ENCODE measurements at regions of chr5 and their contacts with region 1.

Region 1: GRCh38 chr5:1503241-1504068 is 20.3 kb downstream of the LPCAT1 start:
- DNase-seq: no peak
- ATAC-seq: no peak
- H3K4me3 ChIP-seq: no peak overlapping the region
- H3K27ac ChIP-seq: no peak overlapping the region
- H3K4me1 ChIP-seq: no peaks in the 10 kb centered on the region
- H3K27me3 ChIP-seq: no peaks in the 10 kb centered on the region
- CTCF ChIP-seq: no peak

Region 2: DNA sequence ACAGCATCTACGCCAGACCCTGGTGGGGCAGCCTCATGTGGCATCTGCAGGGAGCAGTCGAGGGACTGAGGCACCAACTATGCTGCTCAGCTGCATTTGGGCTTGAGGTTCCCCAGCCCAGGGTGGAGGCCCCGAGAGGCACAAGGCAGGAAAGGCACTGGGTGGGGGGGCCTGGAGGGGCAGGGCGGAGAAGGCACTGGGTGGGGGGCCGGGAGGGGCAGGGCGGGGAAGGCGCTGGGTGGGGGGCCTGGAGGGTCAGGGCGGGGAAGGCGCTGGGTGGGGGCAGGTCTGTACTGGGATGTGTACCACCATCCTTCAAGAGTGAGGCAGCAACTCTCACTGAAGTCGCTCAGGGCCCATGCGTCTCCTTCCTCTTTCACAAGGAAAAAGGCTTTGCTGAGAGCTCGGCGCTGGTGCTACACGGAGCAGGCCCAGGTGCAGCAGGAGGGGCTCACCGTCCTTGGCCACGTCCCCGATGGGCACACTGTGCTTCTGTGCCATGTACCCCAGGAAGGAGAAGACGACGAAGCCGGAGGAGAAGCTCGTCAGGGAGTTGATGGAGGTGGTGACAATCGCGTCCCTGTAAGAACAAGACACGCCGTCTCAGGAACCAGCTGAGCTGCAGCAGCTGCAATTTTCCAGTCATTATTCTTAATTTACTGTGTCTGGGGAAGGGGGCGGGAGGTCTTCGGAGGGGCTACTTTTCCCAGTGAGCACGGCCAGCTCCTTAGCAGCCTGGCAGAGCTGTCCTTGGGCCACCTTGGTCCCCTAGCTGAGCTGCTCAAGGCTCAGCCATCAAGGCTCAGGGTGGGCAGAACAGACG is 89.0 kb before region 1 on chr5:
- CTCF ChIA-PET with region 1: no interaction called
- POLR2A ChIA-PET with region 1: no interaction called
- in situ Hi-C with region 1: no loop called
- intact Hi-C with region 1: no loop called
- DNase-seq: no peak
- ATAC-seq: peak; percentile 76
- H3K4me3 ChIP-seq: no peak overlapping the region
- H3K27ac ChIP-seq: no peak overlapping the region
- H3K4me1 ChIP-seq: no peaks in the 10 kb centered on the region
- H3K27me3 ChIP-seq: no peaks in the 10 kb centered on the region
- CTCF ChIP-seq: no peak

Region 3: GRCh38 chr5:1668141-1668721 is 164.8 kb after region 1 on chr5:
- CTCF ChIA-PET with region 1: interaction called, 10 read pairs
- POLR2A ChIA-PET with region 1: no interaction called
- in situ Hi-C with region 1: no loop called
- intact Hi-C with region 1: no loop called
- DNase-seq: no peak
- ATAC-seq: peak; percentile 56
- H3K4me3 ChIP-seq: no peak overlapping the region
- H3K27ac ChIP-seq: no peak overlapping the region
- H3K4me1 ChIP-seq: peaks cover 4% of the 10 kb centered on the region
- H3K27me3 ChIP-seq: peaks cover 9% of the 10 kb centered on the region; the same call in 1 of the 2 replicates
- CTCF ChIP-seq: no peak

Region 4: GRCh38 chr5:2303431-2304100 is 800.1 kb after region 1 on chr5:
- CTCF ChIA-PET with region 1: no interaction called
- POLR2A ChIA-PET with region 1: no interaction called
- in situ Hi-C with region 1: no loop called
- intact Hi-C with region 1: no loop called
- DNase-seq: no peak
- ATAC-seq: no peak
- H3K4me3 ChIP-seq: no peak overlapping the region
- H3K27ac ChIP-seq: no peak overlapping the region
- H3K4me1 ChIP-seq: no peaks in the 10 kb centered on the region
- H3K27me3 ChIP-seq: no peaks in the 10 kb centered on the region
- CTCF ChIP-seq: no peak